OCI-LY7 (cell line): ENCODE measurements at regions of chr1 and their contacts with region 1.

Region 1: GRCh38 chr1:157691285-157691920 is 9.2 kb downstream of the FCRL3 start:
- DNase-seq: peak; percentile 67
- H3K4me3 ChIP-seq: no peak overlapping the region
- H3K27ac ChIP-seq: no peak overlapping the region
- H3K4me1 ChIP-seq: peaks cover 21% of the 10 kb centered on the region
- CTCF ChIP-seq: peak; percentile 93

Region 2: GRCh38 chr1:157626099-157626498 is 65.3 kb before region 1 on chr1:
- CTCF ChIA-PET with region 1: no interaction called
- POLR2A ChIA-PET with region 1: no interaction called
- intact Hi-C with region 1: loop called (anchors 1 kb)
- DNase-seq: peak; percentile 77
- H3K4me3 ChIP-seq: no peak overlapping the region
- H3K27ac ChIP-seq: no peak overlapping the region
- H3K4me1 ChIP-seq: peaks cover 6% of the 10 kb centered on the region
- CTCF ChIP-seq: peak; percentile 97

Region 3: DNA sequence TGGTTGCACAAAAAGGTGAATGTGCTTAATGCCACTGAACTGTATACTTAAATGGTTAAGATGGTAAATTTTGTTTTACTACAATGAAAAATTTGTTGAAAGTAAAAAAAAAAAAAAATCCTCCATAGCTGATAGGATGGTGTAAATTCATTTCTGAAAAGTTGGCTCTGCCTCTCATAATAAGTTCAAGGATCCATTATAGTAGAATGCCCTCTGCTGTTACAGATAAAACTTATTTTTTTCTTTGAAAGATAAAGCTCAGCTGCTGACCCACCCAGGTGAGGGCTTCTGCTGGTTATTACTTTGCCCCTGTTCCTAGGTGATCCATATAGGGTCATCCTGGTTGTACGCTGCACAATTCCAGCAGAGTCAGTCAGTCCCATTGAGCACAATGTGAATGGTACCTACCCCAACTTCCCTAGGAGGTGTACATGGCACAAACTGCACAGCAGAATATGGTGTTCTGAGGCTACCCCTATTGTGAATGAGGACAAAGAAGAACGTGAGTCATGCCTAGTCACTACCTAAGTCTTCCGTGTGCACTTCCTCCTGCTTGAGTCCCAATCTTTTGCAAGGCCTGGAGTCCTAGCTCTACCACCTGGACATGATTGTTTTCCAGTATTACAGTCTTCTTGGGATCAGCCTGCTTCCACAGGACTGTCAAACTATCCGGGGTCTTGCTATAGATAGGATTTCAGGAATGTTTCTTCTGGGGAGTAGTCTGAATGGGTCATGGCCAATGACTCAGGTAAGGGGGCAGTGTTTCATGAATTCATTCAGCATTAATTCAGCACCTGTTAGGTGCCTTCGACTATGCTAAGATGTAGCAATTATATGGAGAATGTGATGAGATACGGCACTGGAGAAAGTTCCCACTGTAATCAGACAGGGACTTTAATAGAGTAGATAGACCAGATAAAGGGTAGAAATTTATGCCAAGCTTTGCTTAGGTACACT is 171.0 kb after region 1 on chr1:
- CTCF ChIA-PET with region 1: no interaction called
- POLR2A ChIA-PET with region 1: no interaction called
- intact Hi-C with region 1: loop called (anchors 5 kb)
- DNase-seq: peak; percentile 46
- H3K4me3 ChIP-seq: no peak overlapping the region
- H3K27ac ChIP-seq: no peak overlapping the region
- H3K4me1 ChIP-seq: no peaks in the 10 kb centered on the region
- CTCF ChIP-seq: peak; percentile 71